ENCODE measurements at regions of chr7 and their contacts with region 1.

Region 1: DNA sequence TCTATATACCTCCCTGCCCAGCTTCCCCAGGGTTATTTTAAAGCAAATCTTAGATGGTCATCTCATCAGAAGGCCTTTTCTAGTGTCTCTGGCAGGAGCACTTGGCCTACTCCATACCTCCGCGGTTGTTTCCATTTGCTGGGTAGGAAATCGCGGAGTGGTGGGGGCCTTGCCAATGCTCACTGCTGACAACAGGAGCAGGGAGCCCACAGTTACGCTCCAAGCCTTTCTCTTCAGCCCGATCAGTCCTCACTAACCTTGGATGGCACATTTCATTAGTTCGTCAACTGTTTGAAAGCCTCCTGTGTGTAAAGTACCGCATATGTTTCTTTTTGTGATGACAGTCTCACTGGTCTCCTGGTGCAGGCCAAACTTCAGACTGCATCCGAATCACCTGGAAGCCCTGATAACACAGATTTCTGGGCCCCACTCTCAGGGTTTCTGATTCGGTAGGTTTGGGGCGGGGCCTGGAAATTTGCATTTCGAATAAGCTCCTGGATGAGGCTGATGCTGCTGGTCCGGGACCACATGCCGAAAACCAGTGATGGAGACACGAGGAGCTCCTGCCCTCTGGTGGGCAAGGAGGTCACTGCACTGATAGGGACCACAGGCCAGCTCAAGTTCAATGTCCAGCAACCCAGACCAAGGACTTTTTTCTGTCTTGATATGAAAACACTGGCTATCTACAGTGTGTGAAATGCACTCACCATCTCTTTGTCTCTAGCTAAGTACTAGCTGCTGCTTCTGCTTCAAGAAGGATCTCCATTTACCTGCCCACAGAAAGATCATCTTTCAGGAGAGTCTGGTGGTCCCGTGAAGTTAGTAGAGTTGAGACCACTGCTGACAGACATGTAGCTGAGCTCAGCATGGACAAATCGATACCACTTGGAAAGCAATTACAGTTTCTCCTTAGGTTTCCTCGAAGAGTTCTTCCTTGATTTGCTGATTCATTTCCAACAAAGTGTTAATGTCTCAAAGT is 14.0 kb downstream of the LRGUK start:
- DNase-seq: peak; percentile 46
- H3K4me3 Mint-ChIP-seq: no peak overlapping the region
- H3K27ac Mint-ChIP-seq: no peak overlapping the region
- H3K4me1 Mint-ChIP-seq: no peaks in the 10 kb centered on the region
- H3K27me3 Mint-ChIP-seq: peaks cover 4% of the 10 kb centered on the region

Region 2: GRCh38 chr7:134126966-134127848 is 14.0 kb before region 1 on chr7 and contains the start of gene LRGUK:
- CTCF ChIA-PET with region 1: interaction called, 17 read pairs
- POLR2A ChIA-PET with region 1: interaction called, 3 read pairs
- DNase-seq: peak; percentile 78
- H3K4me3 Mint-ChIP-seq: peak within 1 kb of the TSS; percentile 77
- H3K27ac Mint-ChIP-seq: no peak within 1 kb of the TSS
- H3K4me1 Mint-ChIP-seq: peaks cover 15% of the 10 kb centered on the region
- H3K27me3 Mint-ChIP-seq: peaks cover 30% of the 10 kb centered on the region
- total RNA-seq, gene LRGUK: 0.15 TPM in 1 of 2 experiments, not detected in the other

Region 3: DNA sequence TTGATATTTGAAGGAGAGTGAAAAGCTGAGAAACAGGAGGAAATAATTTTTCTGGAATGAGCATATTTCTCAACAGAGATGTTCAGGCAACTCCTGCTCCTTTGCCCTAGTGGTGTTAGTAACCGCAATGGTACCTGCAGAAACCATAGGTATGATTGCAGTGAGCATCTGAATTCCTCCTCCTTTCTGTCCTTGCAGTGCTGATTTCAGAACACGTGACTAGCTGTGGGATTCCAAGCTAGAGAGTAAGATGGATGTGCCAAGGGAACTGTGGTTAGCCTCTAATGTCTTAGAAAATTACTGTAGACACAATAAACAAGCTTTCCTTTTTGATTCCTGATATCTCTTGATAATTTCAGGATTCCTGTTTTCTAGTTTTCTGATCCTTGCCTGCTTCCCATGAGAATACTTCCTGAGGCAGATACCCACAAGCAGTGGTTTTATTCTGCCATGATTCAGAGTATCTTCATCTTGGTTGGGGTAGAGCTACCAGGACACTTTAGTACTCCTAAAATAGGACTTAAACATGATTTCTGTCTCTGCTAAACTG is 13.5 kb after region 1 on chr7:
- CTCF ChIA-PET with region 1: interaction called, 10 read pairs
- POLR2A ChIA-PET with region 1: no interaction called
- DNase-seq: no peak
- H3K4me3 Mint-ChIP-seq: no peak overlapping the region
- H3K27ac Mint-ChIP-seq: no peak overlapping the region
- H3K4me1 Mint-ChIP-seq: no peaks in the 10 kb centered on the region
- H3K27me3 Mint-ChIP-seq: peaks cover 10% of the 10 kb centered on the region

Region 4: DNA sequence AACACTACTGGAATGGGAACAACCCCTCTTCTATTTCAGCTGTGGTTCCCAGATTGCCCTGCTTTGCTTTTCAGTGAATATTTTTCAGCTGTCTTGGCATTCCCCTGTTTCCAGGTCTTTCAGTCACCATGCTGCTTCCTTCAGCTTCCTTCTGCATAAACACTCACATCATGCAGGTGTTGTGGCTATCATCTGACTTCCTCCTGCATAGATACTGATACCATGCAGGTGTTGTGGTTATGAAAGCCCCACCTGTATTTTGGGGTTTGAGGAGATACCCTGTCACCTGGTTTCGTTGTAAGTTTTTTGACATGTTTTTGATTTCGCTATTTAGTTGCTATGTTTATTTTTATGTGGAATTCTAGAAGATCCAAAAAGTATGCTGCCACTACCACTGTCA is 104.1 kb after region 1 on chr7:
- CTCF ChIA-PET with region 1: no interaction called
- POLR2A ChIA-PET with region 1: no interaction called
- DNase-seq: no peak
- H3K4me3 Mint-ChIP-seq: no peak overlapping the region
- H3K27ac Mint-ChIP-seq: no peak overlapping the region
- H3K4me1 Mint-ChIP-seq: no peaks in the 10 kb centered on the region
- H3K27me3 Mint-ChIP-seq: peaks cover 5% of the 10 kb centered on the region